Adrenal gland (tissue), 19 donors: ENCODE measurements at regions of chr5 and their contacts with region 1.

Region 1: DNA sequence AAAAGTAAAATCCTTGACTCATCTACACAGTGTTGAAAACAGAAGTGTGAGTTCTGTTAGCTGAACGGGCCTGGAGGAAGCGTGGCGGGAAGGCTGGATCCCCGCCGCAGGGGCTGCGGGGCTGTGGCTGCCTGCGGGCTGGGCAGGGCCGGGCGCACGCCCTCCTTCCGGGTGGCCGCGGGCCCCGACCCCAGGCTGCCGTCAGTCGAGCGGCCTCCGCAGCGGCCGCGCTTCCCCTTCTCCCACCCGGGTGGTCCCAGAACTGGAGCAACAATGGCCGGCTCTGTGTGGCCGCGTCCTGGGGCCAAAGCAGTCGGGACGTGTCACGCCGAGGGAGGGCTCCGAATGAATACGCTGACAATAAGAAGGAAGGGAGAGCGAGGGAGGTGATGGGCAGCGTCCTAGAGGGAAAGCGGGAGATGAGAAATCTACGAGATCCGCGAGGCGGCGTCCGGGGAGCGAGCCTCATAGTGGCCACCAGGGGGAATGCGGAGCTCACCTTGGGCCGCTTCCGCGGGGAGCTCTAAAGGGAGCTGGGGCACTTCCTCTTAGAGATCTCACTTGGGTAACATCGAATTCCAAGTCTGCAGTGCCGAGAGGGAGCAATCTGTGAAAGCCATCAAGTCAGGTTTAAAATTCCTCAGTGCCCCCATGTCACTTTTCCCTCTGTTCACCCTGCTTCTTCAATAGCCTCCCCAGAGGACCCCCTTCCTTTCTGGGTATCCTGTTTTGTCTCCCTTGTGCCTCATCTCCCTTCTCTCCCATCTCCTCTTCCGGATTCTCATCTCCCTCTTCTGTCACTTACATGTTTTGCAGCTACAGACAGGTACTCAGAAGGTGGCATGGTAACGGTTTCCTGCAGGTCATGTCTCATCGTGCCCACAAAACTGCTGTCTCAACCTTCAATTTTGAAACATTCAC is 83.9 kb downstream of the SLC1A3 start:
- DNase-seq: peak; percentile 63 to 82 (median 74)
- H3K4me3 ChIP-seq: peak overlapping the region in 2 of 4 donors; percentile 3 to 61
- H3K27ac ChIP-seq: peak overlapping the region in 4 of 5 donors; percentile 36 to 82 (median 64)
- H3K4me1 ChIP-seq: peaks cover 0 to 14% of the 10 kb centered on the region in 2 donors
- H3K27me3 ChIP-seq: no peaks in the 10 kb centered on the region
- CTCF ChIP-seq: peak; percentile 63 to 79 (median 70)
- POLR2A ChIP-seq: no peak

Region 2: GRCh38 chr5:36337597-36337996 is 352.7 kb before region 1 on chr5:
- intact Hi-C with region 1: no loop called
- DNase-seq: no peak
- H3K4me3 ChIP-seq: no peak overlapping the region
- H3K27ac ChIP-seq: no peak overlapping the region
- H3K4me1 ChIP-seq: no peaks in the 10 kb centered on the region
- H3K27me3 ChIP-seq: no peaks in the 10 kb centered on the region
- CTCF ChIP-seq: no peak
- POLR2A ChIP-seq: no peak

Region 3: GRCh38 chr5:36414869-36415282 is 275.4 kb before region 1 on chr5:
- intact Hi-C with region 1: loop called (anchors 2 to 5 kb)
- DNase-seq: no peak
- H3K4me3 ChIP-seq: no peak overlapping the region
- H3K27ac ChIP-seq: no peak overlapping the region
- H3K4me1 ChIP-seq: no peaks in the 10 kb centered on the region
- H3K27me3 ChIP-seq: no peaks in the 10 kb centered on the region
- CTCF ChIP-seq: peak; percentile 31 to 81 (median 58)
- POLR2A ChIP-seq: no peak

Region 4: GRCh38 chr5:36494756-36495601 is 195.3 kb before region 1 on chr5:
- intact Hi-C with region 1: loop called in 1 of 2 experiments (anchors 10 kb)
- DNase-seq: peak in 5 of 7 donors; percentile 22 to 44 (median 37)
- H3K4me3 ChIP-seq: peak overlapping the region in 1 of 4 donors; percentile 15
- H3K27ac ChIP-seq: no peak overlapping the region
- H3K4me1 ChIP-seq: peaks cover 0 to 5% of the 10 kb centered on the region in 2 donors
- H3K27me3 ChIP-seq: no peaks in the 10 kb centered on the region
- CTCF ChIP-seq: no peak
- POLR2A ChIP-seq: no peak

Region 5: DNA sequence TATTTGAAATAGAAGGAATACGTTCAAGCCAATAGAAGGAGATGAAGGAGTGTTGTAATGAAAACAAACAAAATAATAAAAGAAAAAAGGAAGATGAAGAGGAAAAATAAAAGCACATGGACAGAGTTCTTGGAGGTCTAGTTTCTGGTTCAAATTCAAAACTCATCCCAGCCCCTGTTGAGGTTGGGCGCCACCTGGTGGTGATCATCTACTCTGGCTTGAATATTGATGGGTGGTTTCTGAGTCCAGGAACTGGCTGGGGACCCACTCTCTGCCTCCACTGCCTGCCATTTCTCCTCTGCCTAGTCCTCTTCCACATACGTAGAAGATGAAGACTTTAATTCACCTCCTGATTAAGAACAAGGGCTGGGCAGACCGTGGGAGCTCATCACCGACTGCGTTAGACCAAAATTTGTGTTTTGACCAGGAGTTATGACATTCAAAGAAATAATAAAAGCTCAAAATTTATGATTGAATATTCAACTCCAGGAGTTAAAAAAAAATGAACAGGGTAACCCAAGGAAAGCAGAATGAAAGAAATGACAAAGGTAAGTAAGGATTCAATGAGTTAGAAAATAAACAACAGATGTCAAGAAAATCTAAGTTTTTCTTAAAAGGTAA is 182.9 kb before region 1 on chr5:
- intact Hi-C with region 1: loop called in 1 of 2 experiments (anchors 5 kb)
- DNase-seq: peak; percentile 74 to 90 (median 80)
- H3K4me3 ChIP-seq: no peak overlapping the region
- H3K27ac ChIP-seq: no peak overlapping the region
- H3K4me1 ChIP-seq: no peaks in the 10 kb centered on the region
- H3K27me3 ChIP-seq: peaks cover 5% of the 10 kb centered on the region
- CTCF ChIP-seq: peak; percentile 65 to 90 (median 83)
- POLR2A ChIP-seq: no peak